ENCODE measurements at regions of chr4 and their contacts with region 1.

Region 1: GRCh38 chr4:77240469-77241066 is 83.6 kb downstream of the CCNG2 start:
- DNase-seq: peak; percentile 18 to 59 (median 38)
- ATAC-seq: peak; percentile 59
- H3K4me3 ChIP-seq: no peak overlapping the region
- H3K4me3 Mint-ChIP-seq: no peak overlapping the region
- H3K27ac ChIP-seq: no peak overlapping the region
- H3K27ac Mint-ChIP-seq: no peak overlapping the region
- H3K4me1 ChIP-seq: no peaks in the 10 kb centered on the region
- H3K4me1 Mint-ChIP-seq: no peaks in the 10 kb centered on the region
- H3K27me3 ChIP-seq: no peaks in the 10 kb centered on the region
- H3K27me3 Mint-ChIP-seq: peaks cover 6% of the 10 kb centered on the region
- CTCF ChIP-seq: peak; percentile 76

Region 2: DNA sequence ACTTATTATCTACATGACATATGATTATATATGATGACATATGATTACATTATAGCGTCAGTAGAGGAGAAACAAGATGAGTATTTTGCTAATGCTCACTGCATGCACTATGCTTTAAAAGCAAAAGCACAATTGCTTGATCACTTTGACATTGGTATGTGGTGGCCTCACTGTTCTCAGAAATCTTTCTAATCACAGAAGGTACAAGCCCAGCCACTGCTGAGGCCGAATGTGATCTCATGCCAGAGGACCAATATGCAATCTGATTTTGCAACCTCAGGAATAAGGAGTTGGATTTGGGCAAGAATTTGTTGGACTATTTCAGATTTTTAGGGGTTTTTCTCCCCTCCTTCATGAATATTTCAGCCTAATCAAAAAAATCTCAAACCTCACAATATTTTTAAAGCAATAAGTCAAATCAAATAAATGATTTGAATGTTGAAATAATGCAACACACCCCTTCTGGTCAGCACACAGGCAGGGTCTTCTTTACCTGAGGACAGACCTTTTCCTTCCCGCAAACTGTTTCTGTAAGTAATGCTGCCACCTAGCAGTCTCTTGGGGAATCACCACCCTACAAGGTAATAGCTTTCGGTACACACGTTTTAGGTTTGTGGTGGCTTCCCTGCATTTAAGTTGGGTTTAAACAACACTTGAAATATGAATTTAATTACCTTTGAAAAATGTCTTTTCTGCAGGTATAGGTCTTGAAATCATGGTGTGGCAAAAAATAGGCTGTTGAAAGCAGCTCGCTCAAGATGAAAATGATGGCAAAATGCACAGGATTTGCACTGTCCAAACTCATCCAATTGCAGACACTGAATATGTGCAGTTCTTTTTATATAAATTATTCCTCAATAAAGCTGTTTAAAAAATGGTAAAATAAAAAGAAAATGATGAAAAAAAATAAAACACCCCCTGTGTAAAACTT is 360.2 kb after region 1 on chr4:
- CTCF ChIA-PET with region 1: no interaction called
- POLR2A ChIA-PET with region 1: no interaction called
- intact Hi-C with region 1: loop called (anchors 1 to 10 kb)
- DNase-seq: peak in 7 of 14 experiments; percentile 2 to 49 (median 25)
- ATAC-seq: no peak
- H3K4me3 ChIP-seq: no peak overlapping the region
- H3K4me3 Mint-ChIP-seq: no peak overlapping the region
- H3K27ac ChIP-seq: no peak overlapping the region
- H3K27ac Mint-ChIP-seq: no peak overlapping the region
- H3K4me1 ChIP-seq: no peaks in the 10 kb centered on the region
- H3K4me1 Mint-ChIP-seq: peaks cover 8% of the 10 kb centered on the region
- H3K27me3 ChIP-seq: no peaks in the 10 kb centered on the region
- H3K27me3 Mint-ChIP-seq: peaks cover 6% of the 10 kb centered on the region
- CTCF ChIP-seq: peak; percentile 81

Measured in CD4-positive, alpha-beta T cell (primary cell).